Activated naive CD4-positive, alpha-beta T cell treated with anti-CD3 and anti-CD28 coated beads, Interleukin-2, amount 10 ng/mL, durations not matched to agents 7 days and 5 days (primary cell): ENCODE measurements at regions of chr12 and their contacts with region 1.

Region 1: GRCh38 chr12:105319691-105320209 is 10.7 kb upstream of the C12orf75 start:
- DNase-seq: peak; percentile 39
- H3K4me3 Mint-ChIP-seq: no peak overlapping the region
- H3K27ac Mint-ChIP-seq: no peak overlapping the region
- H3K4me1 Mint-ChIP-seq: peaks cover 47% of the 10 kb centered on the region
- H3K27me3 Mint-ChIP-seq: peaks cover 5% of the 10 kb centered on the region

Region 2: GRCh38 chr12:105330931-105331804 is 11.4 kb after region 1 on chr12:
- CTCF ChIA-PET with region 1: interaction called, 11 read pairs
- DNase-seq: peak; percentile 60
- H3K4me3 Mint-ChIP-seq: peak overlapping the region; percentile 79
- H3K27ac Mint-ChIP-seq: peak overlapping the region; percentile 85
- H3K4me1 Mint-ChIP-seq: peaks cover 88% of the 10 kb centered on the region
- H3K27me3 Mint-ChIP-seq: no peaks in the 10 kb centered on the region

Region 3: DNA sequence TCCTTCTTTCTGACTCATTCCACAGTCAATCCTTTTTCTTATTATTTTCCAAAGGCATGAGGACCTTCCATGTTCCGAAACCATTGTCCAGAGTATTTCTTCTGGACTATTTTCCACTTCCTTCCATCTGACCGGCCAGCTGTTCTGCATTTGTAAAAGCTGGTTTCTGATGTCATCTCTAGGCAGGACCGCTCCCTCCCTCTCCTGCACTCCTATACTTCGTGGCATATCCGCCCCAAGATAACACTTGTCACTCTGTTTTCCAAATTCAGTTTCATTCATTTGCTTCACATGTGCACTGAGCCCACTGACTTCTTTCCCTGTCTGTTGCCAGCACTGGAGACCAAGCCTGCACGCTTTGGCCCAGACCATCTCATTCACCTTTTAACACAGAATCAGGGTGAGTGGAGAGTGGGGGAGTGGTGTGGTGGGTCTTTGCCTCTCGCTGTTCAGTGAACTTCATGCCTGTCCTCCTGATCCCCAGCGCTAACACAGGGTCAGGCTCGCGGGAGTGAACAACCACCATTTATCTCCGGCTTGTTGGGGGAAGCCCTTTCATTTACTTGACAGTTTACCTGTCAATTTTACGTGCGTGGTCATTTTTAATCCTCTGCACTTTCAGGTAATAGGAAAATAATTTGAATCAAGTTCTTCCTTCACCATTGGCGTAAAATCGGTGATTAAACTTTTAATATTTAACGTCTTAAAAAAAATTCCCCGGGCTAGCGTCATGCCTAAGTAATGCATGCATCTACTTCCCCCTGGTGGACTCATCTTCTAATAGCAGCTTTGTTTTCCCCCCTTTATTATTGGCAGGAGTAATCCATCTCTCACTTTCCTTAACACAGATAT is 63.2 kb after region 1 on chr12:
- CTCF ChIA-PET with region 1: interaction called, 17 read pairs
- DNase-seq: no peak
- H3K4me3 Mint-ChIP-seq: no peak overlapping the region
- H3K27ac Mint-ChIP-seq: no peak overlapping the region
- H3K4me1 Mint-ChIP-seq: no peaks in the 10 kb centered on the region
- H3K27me3 Mint-ChIP-seq: peaks cover 5% of the 10 kb centered on the region

Region 4: DNA sequence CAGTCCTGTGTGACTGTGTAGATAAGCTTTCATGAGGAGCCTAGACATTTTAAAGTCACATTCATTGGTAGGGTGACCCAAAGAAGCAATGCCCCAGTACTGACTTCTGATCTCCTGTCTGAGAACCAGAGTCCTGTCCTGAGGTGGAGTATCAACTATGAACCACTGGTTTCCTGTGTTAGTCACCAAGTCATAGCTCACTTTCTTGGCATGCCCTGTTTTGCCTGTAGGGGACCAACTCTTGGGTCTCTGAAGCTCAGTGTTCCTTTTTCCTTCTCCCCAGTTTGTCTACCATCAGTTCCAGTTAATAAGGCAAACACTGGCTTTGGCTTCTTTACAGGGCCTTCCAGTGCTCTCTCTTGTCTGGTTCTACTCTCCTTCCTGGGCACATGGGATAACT is 108.1 kb after region 1 on chr12:
- CTCF ChIA-PET with region 1: no interaction called
- DNase-seq: no peak
- H3K4me3 Mint-ChIP-seq: no peak overlapping the region
- H3K27ac Mint-ChIP-seq: no peak overlapping the region
- H3K4me1 Mint-ChIP-seq: no peaks in the 10 kb centered on the region
- H3K27me3 Mint-ChIP-seq: peaks cover 11% of the 10 kb centered on the region

Region 5: GRCh38 chr12:105485321-105485910 is 165.7 kb after region 1 on chr12:
- CTCF ChIA-PET with region 1: no interaction called
- DNase-seq: no peak
- H3K4me3 Mint-ChIP-seq: no peak overlapping the region
- H3K27ac Mint-ChIP-seq: no peak overlapping the region
- H3K4me1 Mint-ChIP-seq: no peaks in the 10 kb centered on the region
- H3K27me3 Mint-ChIP-seq: no peaks in the 10 kb centered on the region